ENCODE measurements at regions of chr6 and their contacts with region 1.

Region 1: GRCh38 chr6:3518356-3519225 is 61.7 kb upstream of the SLC22A23 start:
- DNase-seq: no peak

Region 2: GRCh38 chr6:3410385-3411360 is 107.9 kb before region 1 on chr6:
- in situ Hi-C with region 1: loop called (anchors 25 kb)
- DNase-seq: peak; percentile 90

Region 3: DNA sequence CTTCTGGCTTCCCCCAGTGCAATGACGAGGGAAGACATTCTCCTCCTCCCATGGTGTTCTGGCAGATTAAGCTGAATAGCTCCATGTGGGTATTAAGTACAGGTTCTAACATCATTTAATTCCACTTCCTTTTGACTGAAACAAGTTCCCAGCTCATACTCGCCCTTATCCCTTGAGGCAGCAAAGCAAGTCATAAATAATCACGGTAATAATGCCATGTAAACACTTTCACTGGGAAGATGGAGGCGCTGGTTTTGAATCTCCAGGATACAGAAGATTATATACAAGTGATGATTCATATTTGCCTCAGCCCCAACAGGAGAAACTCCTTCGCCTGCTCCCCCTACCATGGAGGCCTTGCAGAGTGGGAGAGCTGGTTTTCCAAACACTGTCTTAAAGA is 91.6 kb after region 1 on chr6:
- in situ Hi-C with region 1: no loop called
- DNase-seq: no peak